CD4-positive, alpha-beta T cell (primary cell): ENCODE measurements at regions of chr9 and their contacts with region 1.

Region 1: DNA sequence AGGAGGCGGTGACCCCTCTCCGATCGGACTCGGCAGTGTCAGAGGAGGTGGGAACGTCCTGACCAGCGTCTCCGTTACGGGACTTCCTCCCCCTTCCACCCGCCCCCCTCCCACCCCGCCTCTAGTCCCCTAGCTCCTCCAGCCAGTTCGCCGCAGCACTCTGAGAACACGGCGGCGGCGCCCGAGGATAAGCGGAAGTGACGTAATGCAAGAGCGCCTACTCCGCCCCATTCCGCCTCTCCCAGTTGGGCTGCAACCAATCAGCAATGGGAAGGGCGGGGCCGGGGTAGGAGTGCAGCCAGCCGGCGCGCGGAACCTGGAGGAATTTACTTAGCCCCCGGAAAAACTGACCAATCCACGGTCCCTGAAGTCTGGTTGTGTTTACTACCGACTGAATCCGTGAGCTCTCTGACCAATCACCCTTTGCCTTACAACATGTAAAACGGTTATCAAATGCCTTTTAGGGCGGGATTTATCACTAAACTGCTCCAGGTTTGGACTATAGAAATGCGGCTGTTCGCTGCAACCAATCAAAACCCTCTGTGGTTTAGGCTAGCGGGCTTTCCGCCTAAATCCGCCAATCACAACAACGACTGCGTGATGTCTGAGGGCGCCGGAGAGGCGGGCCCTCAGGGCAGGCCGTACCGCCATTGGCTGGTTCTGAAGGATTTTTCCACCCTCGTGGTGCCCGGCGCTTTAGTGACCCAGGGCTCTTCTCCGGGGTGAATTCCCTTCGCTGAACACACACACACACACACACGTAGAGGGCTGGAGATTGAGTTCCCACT is at the start of gene ZBTB5:
- DNase-seq: peak; percentile 97 to 100 (median 98)
- ATAC-seq: peak; percentile 80
- H3K4me3 ChIP-seq: peak within 1 kb of the TSS; percentile 96
- H3K4me3 Mint-ChIP-seq: peak within 1 kb of the TSS; percentile 91
- H3K27ac ChIP-seq: peak within 1 kb of the TSS; percentile 90 to 95
- H3K27ac Mint-ChIP-seq: peak within 1 kb of the TSS; percentile 92
- H3K4me1 ChIP-seq: peaks cover 31% of the 10 kb centered on the region
- H3K4me1 Mint-ChIP-seq: peaks cover 40% of the 10 kb centered on the region
- H3K27me3 ChIP-seq: no peaks in the 10 kb centered on the region
- H3K27me3 Mint-ChIP-seq: no peaks in the 10 kb centered on the region
- CTCF ChIP-seq: no peak
- total RNA-seq, gene ZBTB5: 21.3 to 22.0 TPM

Region 2: GRCh38 chr9:36400332-36401163 is 1064.9 kb before region 1 on chr9:
- CTCF ChIA-PET with region 1: no interaction called
- POLR2A ChIA-PET with region 1: no interaction called
- intact Hi-C with region 1: loop called in 1 of 2 experiments (anchors 5 kb)
- DNase-seq: peak; percentile 80 to 96 (median 90)
- ATAC-seq: peak; percentile 74
- H3K4me3 ChIP-seq: peak overlapping the region; percentile 75
- H3K4me3 Mint-ChIP-seq: peak overlapping the region; percentile 92
- H3K27ac ChIP-seq: peak overlapping the region; percentile 88 to 98
- H3K27ac Mint-ChIP-seq: peak overlapping the region; percentile 94
- H3K4me1 ChIP-seq: peaks cover 18% of the 10 kb centered on the region
- H3K4me1 Mint-ChIP-seq: peaks cover 54% of the 10 kb centered on the region
- H3K27me3 ChIP-seq: no peaks in the 10 kb centered on the region
- H3K27me3 Mint-ChIP-seq: no peaks in the 10 kb centered on the region
- CTCF ChIP-seq: no peak

Region 3: DNA sequence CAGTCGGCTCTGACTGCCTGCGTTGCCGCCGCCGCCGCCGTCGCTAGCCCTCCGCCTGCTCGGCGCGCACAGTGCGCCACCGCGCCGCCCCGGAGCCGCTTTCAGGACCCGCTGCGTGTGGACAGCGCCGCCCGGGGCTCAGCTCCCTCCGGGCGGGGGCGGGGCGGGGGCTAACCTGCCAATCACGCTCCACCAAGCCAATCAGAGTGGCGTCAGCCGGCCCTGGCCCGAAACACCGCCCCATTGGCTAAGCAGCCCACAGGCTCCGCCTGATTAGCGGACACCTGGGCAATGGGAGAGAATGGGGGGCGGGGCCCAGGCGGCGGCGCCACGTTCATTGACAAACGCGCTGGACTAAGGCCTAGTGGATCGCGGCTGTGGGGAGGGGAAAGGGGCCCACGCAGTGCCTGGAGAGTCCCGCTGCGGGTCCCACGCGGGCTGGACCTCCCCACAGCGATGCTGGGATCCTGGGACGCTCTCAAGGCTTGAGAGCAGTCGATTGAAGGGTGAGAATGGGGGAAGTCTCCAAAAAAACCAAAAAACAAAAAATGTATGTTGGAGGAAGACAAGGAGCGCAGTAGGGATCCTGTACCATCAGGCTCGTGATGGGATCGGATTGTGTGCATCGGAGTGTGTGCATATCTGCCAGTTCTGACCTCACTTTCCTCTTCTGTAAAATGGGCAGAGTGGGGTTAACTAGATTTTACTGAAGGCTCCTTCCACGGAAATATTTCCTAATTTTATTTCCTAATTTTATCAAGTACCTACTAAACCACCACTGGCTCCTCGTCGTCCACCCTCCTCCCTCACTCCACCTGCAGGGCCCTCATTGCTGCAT is 437.6 kb before region 1 on chr9:
- CTCF ChIA-PET with region 1: no interaction called
- POLR2A ChIA-PET with region 1: no interaction called
- intact Hi-C with region 1: loop called in 1 of 2 experiments (anchors 10 kb)
- DNase-seq: peak; percentile 62 to 92 (median 77)
- ATAC-seq: peak; percentile 96
- H3K4me3 ChIP-seq: peak overlapping the region; percentile 38
- H3K4me3 Mint-ChIP-seq: peak overlapping the region; percentile 54
- H3K27ac ChIP-seq: no peak overlapping the region
- H3K27ac Mint-ChIP-seq: no peak overlapping the region
- H3K4me1 ChIP-seq: peaks cover 61% of the 10 kb centered on the region
- H3K4me1 Mint-ChIP-seq: peaks cover 38% of the 10 kb centered on the region
- H3K27me3 ChIP-seq: peaks cover 96% of the 10 kb centered on the region in 2 experiments
- H3K27me3 Mint-ChIP-seq: peaks cover 94% of the 10 kb centered on the region
- CTCF ChIP-seq: no peak

Region 4: GRCh38 chr9:37422289-37423104 is 42.9 kb before region 1 on chr9 and contains the start of gene GRHPR:
- CTCF ChIA-PET with region 1: no interaction called
- POLR2A ChIA-PET with region 1: interaction called, 21 read pairs
- intact Hi-C with region 1: loop called (anchors 2 to 5 kb)
- DNase-seq: peak; percentile 80 to 95 (median 88)
- ATAC-seq: peak; percentile 99
- H3K4me3 ChIP-seq: peak within 1 kb of the TSS; percentile 86
- H3K4me3 Mint-ChIP-seq: peak within 1 kb of the TSS; percentile 96
- H3K27ac ChIP-seq: peak within 1 kb of the TSS; percentile 73 to 80
- H3K27ac Mint-ChIP-seq: peak within 1 kb of the TSS; percentile 90
- H3K4me1 ChIP-seq: peaks cover 34% of the 10 kb centered on the region
- H3K4me1 Mint-ChIP-seq: peaks cover 28% of the 10 kb centered on the region
- H3K27me3 ChIP-seq: no peaks in the 10 kb centered on the region
- H3K27me3 Mint-ChIP-seq: no peaks in the 10 kb centered on the region
- CTCF ChIP-seq: no peak
- total RNA-seq, gene GRHPR: 29.0 to 29.6 TPM

Region 5: DNA sequence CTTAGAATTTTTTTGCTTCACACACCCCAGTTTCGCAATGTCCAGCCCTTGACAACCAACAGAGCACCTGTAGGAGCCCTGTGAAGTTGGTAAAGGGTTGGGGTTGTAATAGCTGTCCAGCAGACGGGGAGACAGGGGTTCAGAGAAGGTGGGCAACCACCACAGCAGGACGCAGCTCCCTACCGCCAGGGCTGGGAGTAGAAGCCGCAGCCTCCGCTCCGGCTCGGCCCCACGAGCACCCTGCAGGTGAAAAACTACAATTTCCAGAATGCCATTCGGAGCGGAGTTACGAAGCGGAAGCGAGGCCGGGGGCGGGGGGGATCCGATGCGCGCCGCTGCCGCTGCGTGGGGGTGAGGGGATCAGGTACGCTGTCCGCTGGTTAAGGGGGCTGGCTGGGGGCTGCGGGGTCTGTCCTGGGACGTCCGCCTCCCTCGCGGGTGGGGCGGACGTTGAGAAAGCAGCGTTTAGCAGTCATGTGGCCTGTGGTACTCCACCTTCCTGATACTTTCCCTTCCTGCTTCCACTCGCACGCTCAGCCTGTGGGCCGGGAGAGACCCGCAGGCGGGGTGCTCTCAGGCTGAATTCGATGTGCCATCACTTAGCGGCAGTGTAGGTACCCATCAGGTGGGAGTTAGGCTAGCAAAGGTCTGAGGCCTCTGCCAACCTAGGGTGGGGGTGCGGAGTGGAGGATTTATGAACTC is 288.2 kb after region 1 on chr9 and contains the start of gene TRMT10B:
- CTCF ChIA-PET with region 1: no interaction called
- POLR2A ChIA-PET with region 1: no interaction called
- intact Hi-C with region 1: loop called in 1 of 2 experiments (anchors 5 kb)
- DNase-seq: peak; percentile 50 to 85 (median 62)
- ATAC-seq: peak; percentile 93
- H3K4me3 ChIP-seq: peak within 1 kb of the TSS; percentile 97
- H3K4me3 Mint-ChIP-seq: peak within 1 kb of the TSS; percentile 93
- H3K27ac ChIP-seq: peak within 1 kb of the TSS; percentile 69 to 78
- H3K27ac Mint-ChIP-seq: peak within 1 kb of the TSS; percentile 88
- H3K4me1 ChIP-seq: peaks cover 18% of the 10 kb centered on the region
- H3K4me1 Mint-ChIP-seq: peaks cover 33% of the 10 kb centered on the region
- H3K27me3 ChIP-seq: no peaks in the 10 kb centered on the region
- H3K27me3 Mint-ChIP-seq: no peaks in the 10 kb centered on the region
- CTCF ChIP-seq: no peak
- total RNA-seq, gene TRMT10B: 6.6 to 8.3 TPM